Posterior cingulate gyrus (tissue), 11 donors: ENCODE measurements at regions of chr1 and their contacts with region 1.

Region 1: DNA sequence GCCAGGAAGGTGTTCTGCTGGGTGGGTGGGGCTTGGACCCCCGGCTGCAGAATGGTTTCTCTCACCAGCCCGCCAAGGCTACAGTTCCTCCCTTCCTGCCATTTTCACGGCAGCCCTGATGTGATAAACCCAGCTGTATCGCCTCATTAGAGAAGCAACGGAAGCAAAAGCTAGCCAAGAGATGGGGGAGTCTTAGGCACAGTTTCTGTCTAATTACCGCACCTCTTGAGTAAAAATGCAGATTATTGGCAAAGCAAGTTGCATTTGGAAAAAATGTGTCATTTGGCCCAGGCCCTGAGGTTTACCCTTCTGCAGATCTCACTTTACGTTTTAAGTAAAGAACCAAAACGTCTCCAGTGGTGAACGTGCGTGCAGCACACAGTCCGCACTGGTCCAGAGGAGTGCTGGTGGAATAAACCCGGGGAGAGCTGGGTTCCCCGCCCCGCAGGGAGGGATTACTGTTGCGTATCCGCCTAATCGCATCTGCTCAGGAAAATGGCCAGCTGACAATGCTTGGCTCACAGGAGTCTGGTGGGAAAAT is 109.9 kb downstream of the GALNT2 start:
- DNase-seq: peak; percentile 51 to 95 (median 78)

Region 2: DNA sequence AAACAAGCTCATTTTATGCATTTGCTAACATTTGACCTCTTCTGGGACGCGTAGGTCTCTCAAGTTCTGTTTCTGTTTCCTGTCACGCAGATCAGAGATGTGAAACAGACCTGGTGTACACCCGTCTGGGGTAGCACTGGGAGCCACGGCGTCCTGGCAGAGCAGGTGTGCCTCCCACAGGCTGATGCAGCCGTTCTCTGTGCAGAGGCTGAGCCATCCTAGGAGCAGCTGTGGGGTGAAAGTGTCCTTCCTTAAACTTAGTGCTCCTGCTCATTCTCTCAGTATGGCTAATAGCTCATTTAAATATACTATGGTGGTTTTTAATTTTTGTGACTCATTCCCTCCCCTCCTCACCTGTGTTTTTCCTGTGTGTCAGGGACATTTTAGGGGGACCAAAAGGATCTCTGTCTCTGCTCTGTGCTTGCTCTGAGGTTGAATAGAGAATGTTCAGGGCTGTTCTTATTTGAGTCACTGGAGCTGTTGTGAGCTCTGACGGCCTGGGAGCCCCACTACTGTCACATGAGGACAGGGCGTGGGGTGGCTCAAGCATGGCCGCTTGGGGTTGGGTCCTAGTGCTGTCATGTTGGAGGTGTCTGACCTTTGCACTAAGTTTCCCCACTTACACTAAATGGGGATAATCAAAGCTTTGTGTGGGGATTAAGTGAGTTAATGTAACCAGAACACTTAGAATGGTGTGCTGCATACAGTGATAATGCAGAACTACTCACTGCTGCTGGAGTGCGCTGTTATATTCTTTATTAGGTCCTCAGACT is 66.9 kb before region 1 on chr1:
- intact Hi-C with region 1: loop called (anchors 10 kb)
- DNase-seq: peak in 1 of 10 donors; percentile 53

Region 3: DNA sequence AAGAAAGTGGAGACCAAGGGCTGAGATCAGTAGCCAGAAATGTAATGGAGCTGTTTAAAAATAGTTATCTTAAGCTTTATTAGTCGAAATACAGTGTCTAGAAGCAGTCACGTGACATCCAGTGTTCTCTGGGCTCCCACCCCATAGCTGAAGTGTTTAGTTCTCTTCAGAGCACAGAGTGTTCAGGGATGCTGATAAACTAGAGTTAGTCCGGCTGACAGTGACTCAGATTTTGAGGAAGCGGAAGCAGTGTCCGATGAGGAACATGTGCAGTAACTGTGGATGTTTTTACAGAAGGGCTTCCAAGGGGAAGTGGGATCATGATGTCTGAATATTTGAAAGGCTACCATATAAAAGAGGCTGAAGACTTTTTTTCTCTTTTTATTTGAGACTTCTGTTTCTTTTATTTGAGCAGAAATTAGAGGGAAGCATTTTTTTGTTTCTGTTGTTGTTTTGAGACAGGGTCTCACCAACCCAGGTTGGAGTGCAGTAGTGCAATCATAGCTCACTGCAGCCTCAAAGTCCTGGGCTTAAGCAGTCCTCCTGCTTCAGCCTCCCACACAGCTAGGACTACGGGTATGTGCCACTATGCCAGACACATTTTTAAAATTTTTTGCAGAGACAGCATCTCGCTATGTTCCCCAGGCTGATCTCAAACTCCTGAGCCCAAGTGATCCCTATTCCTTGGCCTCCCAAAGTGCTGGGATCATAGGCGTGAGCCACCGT is 14.3 kb after region 1 on chr1:
- intact Hi-C with region 1: no loop called
- DNase-seq: peak in 2 of 10 donors; percentile 19 to 30